Cardiac septum (tissue), 1 donor: ENCODE measurements at regions of chr20 and their contacts with region 1.

Region 1: DNA sequence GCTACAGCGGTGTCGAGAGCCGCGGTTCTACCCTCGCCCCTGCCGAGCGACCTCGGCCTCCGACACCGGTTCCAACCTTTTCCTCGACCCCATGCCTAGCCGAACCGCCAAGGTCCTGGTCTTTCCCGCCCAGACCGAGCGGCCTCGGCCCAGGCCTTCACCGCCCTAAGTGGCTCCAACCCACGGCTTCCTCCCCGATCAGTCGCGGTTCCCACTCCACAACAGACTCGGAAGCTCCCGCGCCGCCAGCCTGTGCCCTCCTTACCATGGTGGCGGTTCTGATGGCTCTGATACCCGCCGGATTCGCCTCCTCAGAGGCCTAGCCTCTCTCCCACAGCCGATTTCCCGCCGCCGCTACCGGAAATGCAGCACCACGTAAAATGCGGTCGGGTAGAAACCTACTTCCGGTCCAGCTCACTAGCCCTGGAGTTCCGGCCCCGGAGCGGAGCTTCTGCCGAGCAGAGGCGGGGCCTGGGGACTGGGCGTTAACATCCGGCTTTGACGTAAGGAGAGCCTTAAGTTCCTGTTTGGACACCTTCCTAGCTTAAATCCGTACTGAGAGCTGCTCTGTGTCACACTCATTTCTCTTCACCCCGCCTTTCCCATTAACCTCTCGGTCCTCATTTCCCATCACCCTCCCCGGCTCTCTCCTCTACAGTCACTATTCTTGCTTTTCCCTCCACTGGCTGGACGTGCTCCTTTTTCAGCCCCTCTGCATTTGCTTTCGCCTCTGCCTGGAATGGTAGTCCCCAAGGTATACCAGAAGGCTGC is at the start of gene SNRPB:
- DNase-seq: peak; percentile 98
- total RNA-seq, gene SNRPB: 53.0 TPM

Region 2: DNA sequence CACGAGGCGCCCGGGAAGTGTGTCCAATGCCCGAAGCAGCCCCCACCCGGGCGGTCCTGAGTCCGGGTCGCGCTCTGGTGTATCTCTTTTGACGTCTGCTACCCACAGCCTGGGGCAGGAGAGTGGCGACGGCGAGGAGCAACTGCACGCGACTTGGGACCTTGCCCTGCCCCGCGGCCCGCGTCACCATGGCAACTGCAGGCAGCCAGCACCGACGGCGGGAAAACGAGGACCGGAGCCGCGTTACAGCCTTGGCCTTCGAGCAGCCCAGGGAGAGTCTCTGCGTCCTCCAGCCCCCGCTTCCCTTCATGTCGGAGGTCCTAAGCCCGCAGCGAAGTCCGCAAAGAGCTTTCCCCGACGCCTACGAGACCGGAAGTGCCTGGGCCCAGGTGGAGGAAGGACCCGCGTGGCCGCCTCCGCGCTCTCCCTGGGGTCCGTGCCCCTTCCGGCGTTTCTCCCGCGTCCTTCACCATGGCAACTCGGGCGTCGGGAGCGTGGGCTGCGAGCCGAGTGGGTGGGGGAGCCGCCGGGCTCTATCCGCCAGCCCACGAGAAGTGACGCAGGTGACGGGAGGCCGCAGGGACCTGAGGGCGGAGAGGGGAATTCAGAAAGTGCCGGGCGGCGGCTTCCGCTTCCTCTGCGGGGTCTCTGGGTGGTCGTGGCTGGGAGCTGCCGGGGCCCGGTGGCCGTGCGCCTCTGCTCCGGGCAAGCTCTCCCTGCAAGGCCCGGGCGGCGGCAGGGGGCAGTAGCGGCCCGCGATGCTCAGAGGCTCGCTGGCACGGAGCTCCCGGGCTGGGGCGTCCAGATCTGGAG is 263.4 kb before region 1 on chr20:
- intact Hi-C with region 1: no loop called
- DNase-seq: peak; percentile 90

Region 3: GRCh38 chr20:2421247-2421646 is 49.4 kb before region 1 on chr20:
- intact Hi-C with region 1: no loop called
- DNase-seq: no peak

Region 4: DNA sequence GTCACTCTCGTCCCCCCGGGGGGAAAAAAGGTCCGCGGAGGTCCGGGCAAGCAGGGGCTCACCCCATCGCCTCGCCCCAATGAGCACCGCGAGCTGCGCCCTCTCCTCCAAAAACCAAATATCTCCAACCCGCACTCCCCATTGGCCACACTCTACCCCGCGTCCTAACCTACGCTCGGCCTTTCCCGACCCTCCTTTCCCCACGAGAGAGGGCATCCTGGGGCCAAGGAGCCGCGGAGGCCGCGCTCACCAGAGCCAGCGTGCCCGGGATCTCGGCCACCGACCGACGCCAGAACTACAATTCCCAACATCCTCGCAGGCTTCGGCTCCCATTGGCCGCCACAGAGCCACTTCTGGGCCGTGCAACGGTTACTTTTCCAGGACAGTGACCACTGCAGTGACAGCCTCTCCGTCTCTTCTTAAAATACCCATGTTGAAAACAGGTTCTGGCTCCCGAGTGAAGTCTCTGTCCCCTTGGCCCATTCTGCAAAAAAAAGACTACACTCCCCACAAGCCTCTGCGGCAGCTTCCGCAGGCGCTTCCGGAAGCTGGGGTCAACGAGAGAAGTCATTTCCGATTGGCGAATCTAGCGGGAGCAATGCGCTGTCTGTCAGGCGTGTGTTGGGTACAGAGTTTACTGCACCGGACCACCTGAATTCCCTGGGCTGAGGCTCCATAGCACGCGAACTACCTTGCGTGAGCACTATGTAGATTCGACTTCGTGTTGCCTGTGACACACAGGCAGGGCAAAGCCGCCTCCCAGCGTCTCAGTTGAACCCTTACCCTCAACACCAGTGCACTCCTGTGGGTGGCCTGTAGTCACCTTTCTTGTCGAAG is 38.2 kb after region 1 on chr20 and contains the start of gene ZNF343:
- intact Hi-C with region 1: loop called (anchors 1 kb)
- DNase-seq: peak; percentile 93
- total RNA-seq, gene ZNF343: 8.5 TPM

Region 5: DNA sequence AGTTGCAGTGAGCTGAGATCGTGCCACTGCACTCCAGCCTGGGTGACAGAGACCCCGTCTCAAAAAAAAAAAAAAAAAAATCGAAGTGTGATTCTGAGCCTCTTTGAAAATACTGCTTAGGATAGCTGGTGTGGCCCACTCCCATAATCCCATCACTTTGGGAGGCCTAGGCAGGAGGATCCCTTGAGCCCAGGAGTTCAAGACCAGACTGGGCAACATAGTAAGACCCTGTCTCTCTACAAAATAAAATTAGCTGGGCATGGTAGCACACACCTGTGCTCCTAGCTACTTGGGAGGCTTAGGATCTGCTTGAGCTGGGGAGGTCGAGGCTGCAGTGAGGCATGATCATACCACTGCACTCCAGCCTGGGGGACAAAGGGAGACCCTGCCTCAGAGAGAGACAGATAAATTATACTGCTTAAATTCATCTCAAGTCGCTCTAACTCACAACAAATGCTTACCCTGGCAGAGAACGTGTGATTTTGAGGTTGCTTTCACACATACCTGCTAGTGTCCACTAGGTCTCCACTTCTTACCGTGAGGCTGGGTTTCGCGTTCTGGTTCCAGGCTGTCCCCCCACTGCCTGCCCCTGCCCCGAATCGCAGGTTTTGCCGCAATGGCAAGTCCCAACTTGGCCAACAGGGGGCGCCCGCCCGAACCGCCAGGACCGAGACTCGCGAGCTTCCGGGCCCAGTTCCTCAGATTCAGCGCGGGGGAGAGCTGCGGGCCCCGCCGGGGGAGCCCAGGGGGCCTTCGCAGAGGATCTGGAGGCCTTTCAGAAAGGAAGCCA is 53.5 kb after region 1 on chr20:
- intact Hi-C with region 1: loop called (anchors 5 kb)
- DNase-seq: peak; percentile 96

Region 6: DNA sequence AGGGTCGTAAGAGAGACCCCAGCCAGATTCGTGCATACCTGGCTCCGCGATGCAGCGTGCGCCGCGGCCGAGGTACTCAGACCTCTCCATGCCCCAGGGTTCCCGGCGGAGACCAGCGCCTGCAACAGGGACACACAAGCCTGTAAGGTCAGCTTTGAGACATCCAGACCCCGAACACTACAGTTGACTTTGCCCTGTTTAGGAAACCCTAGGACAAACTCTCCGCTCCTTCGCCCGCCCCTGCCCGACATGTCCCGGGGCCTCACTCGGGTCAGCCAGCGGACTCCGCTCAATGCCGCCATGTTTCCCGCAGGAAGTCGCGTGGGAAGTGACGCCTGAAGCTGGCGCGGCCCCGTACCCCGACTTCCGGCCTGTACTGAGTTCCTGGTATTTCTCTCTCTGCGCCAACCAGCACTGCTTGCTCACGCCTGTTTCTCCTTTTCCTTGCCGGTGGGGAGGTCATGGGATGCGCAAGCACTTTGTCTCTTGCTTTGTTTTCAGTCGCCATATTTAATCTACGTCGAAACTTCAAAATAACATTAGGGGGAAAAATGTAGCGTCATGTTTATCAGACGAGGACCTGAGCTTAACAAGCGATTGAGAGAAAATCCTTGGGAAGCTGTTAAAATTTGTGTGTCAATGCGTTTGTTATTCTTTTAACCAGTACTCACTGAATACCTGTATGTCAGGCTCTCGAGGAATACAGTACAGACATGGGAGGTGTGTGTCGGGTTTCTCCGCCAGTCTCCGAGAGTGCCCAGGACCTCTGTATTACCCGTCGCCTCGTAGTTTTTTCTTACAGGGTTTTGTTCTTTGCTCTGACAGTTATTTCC is 193.5 kb after region 1 on chr20 and contains the start of gene IDH3B:
- intact Hi-C with region 1: loop called (anchors 5 kb)
- DNase-seq: peak; percentile 97
- total RNA-seq, gene IDH3B: 121 TPM